ENCODE measurements at regions of chr5 and their contacts with region 1.

Region 1: DNA sequence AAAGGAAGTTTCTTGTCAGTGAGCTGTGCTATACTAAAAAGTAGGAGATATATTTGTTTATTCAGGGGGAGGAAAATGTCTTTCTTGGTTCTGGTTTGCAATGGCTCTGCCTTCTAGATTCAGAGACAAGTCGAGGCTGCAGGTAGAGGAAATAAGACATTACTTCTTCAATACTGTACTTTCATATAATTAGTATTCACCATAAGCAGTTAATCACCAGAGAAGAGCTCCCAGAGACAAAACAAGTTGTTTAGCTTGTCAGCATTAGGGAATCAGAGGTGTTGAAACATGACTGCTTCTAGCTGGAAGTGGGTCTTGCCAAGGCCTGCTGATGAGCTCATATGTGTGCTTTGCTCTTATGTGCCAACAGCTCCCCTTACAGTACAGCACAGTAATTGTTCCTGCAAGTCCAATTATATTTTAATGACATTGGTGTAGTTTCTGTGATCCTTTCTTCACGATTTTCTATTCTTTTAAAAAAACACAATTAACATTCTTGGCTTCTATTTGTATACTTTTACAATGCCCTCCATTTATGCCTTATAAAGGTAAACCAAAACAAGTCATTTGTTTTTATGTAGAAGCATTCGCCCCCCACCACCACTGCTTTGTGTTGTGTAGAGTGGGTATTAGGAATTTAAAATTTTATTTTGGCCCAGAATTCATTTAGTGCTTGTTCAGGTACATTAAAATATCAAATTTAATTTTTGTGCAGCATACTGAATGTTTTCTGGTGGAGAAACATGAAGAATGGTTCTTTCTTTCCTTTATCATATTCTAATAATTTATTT is 112.2 kb downstream of the RPS23 start:
- DNase-seq: peak; percentile 83
- H3K4me3 ChIP-seq: no peak overlapping the region
- H3K27ac ChIP-seq: no peak overlapping the region
- H3K27me3 ChIP-seq: no peaks in the 10 kb centered on the region
- CTCF ChIP-seq: peak; percentile 78

Region 2: GRCh38 chr5:81425569-81425968 is 740.4 kb before region 1 on chr5:
- CTCF ChIA-PET with region 1: interaction called, 14 read pairs
- POLR2A ChIA-PET with region 1: no interaction called
- DNase-seq: no peak
- H3K4me3 ChIP-seq: no peak overlapping the region
- H3K27ac ChIP-seq: no peak overlapping the region
- H3K27me3 ChIP-seq: no peaks in the 10 kb centered on the region
- CTCF ChIP-seq: peak; percentile 61

Region 3: DNA sequence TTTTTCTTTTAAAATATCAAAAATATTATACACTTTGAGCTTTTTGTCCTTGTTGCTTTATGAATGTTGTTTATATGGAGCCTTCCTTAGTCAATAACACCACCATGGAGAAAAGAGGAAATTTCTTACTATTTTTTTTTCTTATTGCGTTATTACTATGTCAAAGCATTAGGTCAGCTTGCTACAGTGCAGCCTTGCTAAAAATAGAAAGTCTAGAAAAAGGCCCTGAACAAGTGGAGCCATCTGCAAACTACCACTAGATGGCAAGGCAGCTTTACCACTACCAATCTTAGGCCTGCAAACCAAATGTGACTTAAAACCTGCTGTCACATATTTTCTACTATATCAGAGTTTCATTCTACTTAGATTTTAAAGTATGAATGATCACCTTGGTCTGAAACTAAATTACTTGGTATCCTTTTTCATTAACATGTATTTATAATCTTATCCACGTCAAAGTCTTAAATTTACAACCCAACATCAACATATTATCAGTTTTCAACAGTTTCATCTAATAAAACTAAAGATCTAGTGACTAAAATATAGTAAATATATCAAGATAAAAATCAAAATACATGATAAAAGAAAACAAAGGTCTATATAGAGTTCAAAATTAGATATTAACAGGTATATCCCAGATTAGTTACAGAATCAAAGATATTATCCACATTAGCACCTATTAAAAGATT is 658.9 kb before region 1 on chr5:
- CTCF ChIA-PET with region 1: interaction called, 20 read pairs
- POLR2A ChIA-PET with region 1: interaction called, 4 read pairs
- DNase-seq: peak; percentile 75
- H3K4me3 ChIP-seq: no peak overlapping the region
- H3K27ac ChIP-seq: no peak overlapping the region
- H3K27me3 ChIP-seq: no peaks in the 10 kb centered on the region
- CTCF ChIP-seq: peak; percentile 96

Region 4: GRCh38 chr5:81751009-81751835 is 414.7 kb before region 1 on chr5 and contains the start of gene SSBP2:
- CTCF ChIA-PET with region 1: interaction called, 9 read pairs
- POLR2A ChIA-PET with region 1: interaction called, 16 read pairs
- DNase-seq: peak; percentile 98
- H3K4me3 ChIP-seq: peak within 1 kb of the TSS; percentile 86
- H3K27ac ChIP-seq: peak within 1 kb of the TSS; percentile 93
- H3K27me3 ChIP-seq: no peaks in the 10 kb centered on the region
- CTCF ChIP-seq: no peak
- polyA plus RNA-seq, gene SSBP2: 70.4 and 74.3 TPM in 2 replicates

Region 5: GRCh38 chr5:81851481-81852178 is 314.3 kb before region 1 on chr5:
- CTCF ChIA-PET with region 1: interaction called, 27 read pairs
- POLR2A ChIA-PET with region 1: interaction called, 18 read pairs
- DNase-seq: peak; percentile 88
- H3K4me3 ChIP-seq: peak overlapping the region; percentile 60
- H3K27ac ChIP-seq: peak overlapping the region; percentile 94
- H3K27me3 ChIP-seq: no peaks in the 10 kb centered on the region
- CTCF ChIP-seq: no peak

Region 6: DNA sequence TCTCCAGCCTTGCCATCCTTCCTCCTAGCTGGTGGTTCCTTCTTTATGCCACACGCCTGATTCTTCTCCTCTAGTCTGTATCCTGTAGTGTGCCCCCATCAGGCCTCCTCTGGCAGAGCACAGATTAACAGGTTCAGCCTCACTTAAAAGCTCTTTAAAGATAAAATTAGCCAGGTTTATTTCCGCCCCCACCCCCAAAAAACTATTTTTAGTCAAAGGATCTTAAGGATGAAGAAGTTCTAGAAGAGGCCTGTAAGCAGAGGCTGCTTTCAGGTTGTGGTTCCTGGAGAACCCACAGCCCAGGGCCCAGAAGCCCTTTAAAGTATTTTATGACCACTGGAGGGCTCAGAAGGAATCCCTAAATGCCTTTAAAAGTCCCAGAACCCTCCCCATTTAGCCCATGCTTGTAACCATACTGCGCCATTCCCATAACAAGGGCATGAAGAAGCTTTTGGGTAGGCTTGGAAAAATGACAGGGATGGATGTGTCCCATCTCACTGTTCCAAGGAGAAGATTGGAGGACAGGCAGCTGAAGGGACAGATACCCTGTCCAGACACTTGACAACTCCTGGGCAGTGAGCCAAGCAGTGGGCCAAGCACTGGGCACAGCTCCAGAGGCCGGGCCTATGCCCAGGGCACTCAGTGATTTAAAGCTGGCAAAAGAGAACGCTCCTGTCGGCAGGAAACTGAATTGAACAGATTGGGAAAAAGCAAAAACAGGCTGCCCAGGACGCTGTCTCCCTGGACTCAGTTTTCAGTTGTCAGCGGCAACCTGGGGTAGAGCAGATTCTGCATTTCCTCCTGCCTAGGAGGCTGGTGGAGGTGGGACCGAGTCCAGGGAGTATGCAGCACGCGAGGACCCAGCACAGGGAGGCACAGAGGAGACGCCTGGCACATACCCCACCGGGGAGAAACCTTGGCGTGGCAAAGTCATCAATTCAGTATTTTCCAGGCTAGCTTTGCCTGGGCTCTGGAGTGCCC is 308.7 kb before region 1 on chr5:
- CTCF ChIA-PET with region 1: interaction called, 27 read pairs
- POLR2A ChIA-PET with region 1: interaction called, 18 read pairs
- DNase-seq: no peak
- H3K4me3 ChIP-seq: no peak overlapping the region
- H3K27ac ChIP-seq: peak overlapping the region; percentile 2
- H3K27me3 ChIP-seq: no peaks in the 10 kb centered on the region
- CTCF ChIP-seq: peak; percentile 4; the same call in 1 of the 2 replicates

Region 7: DNA sequence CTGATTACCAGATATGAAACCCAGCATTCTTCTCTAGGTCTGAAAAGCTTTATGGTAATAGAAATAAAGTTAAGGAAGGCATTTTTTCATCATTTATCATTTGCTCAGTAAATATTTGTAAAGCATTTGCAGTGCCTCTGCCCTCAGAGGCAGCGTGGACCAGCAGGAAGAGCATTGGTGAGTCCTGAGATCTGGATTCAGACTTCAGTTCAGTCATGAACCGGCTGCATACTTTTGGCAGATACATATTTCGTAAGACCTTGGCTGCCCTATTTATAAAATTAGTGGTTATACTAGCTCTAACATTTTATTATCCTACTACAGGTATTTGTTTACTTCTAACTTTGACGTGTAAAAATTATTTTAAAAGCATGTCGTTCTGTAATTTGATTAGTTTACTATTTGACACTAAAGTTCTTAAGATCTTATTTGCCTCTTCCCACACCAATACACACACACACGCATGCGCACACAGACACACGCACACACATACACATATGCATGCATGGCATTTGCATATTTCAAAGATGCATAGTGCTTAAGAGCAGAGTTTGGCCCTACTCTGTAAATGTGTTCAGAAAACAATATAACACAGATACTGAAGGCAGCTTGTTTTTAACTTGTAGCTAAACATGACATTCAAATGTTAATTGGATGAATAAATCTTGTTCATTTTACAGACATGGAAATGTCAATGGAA is 10.3 kb after region 1 on chr5:
- CTCF ChIA-PET with region 1: interaction called, 10 read pairs
- POLR2A ChIA-PET with region 1: no interaction called
- DNase-seq: no peak
- H3K4me3 ChIP-seq: no peak overlapping the region
- H3K27ac ChIP-seq: no peak overlapping the region
- H3K27me3 ChIP-seq: no peaks in the 10 kb centered on the region
- CTCF ChIP-seq: no peak

Measured in AG04450 (cell line).